BJ (cell line): ENCODE measurements at regions of chrX and their contacts with region 1.

Region 1: DNA sequence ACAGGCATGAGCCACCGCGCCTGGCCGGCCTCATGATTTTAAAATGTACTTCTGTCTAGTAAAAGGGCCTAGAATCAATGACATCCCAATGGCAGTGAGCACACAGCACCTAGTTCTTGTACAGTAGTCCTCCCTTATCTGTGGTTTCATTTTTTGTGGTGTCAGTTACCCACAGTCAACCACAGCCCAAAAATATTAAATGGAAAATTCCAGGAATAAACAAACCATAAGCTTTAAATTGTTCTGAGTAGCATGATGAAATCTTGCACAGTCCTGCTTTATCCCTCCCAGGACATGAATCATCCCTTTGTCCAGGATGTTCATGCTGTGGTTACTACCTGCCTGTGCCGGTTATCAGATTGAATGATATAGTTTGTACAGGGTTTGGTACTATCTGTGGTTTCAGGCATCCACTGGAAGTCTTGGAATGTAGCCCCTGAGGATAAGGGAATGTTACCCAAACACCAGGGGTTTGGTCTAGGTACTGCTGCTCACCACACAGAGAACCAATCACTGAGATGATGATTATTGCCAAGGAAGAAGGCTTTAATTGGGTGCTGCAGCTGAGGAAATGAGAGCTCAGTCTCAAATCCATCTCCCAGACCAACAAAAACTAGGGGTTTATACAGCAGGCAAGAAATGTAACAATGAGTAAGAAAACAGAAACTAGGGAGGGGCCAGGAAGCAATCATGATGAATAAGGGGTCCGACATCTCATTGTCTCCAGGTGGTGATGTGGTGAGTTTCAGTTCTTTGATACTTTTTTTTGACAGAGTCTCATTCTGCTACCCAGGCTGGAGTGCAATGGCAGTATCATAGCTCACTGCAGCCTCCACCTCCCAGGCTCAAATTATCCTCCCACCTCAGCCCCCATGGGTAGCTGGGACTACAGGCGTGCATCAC is 16.2 kb upstream of the FHL1 start:
- DNase-seq: peak; percentile 30
- H3K4me3 ChIP-seq: no peak overlapping the region
- H3K27me3 ChIP-seq: 0 out of 2 replicates have a peak, but pooled peaks cover 1% of the 10 kb centered on the region
- CTCF ChIP-seq: no peak

Region 2: DNA sequence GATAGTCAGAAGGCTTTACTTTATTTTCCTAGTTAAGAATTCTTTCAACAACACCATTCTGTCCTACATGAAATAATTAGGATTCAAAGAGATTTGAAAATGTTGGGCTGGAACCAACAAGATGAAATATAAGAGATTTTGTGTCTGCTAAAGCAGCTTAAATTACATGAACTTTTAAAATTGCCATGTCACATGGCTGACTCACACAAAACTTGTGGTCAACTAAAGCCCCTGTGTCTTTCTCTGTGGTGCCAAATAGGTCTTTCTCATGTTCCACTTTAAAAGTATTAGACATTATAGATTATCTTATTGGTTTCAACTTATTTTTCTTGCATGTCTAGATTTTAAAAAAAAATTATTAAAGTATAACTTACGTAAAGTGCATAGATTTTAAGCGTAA is 44.7 kb before region 1 on chrX:
- CTCF ChIA-PET with region 1: no interaction called
- POLR2A ChIA-PET with region 1: no interaction called
- DNase-seq: no peak
- H3K4me3 ChIP-seq: no peak overlapping the region
- H3K27me3 ChIP-seq: no peaks in the 10 kb centered on the region
- CTCF ChIP-seq: no peak

Region 3: GRCh38 chrX:136260771-136261170 is 129.6 kb after region 1 on chrX:
- CTCF ChIA-PET with region 1: interaction called, 3 read pairs
- POLR2A ChIA-PET with region 1: interaction called, 19 read pairs
- DNase-seq: peak; percentile 32
- H3K4me3 ChIP-seq: no peak overlapping the region
- H3K27me3 ChIP-seq: no peaks in the 10 kb centered on the region
- CTCF ChIP-seq: no peak